ENCODE measurements at regions of chr2 and their contacts with region 1.

Region 1: GRCh38 chr2:23824777-23825212 is 102.1 kb downstream of the ATAD2B start:
- DNase-seq: no peak
- H3K4me3 ChIP-seq: no peak overlapping the region
- H3K27ac ChIP-seq: peak overlapping the region; percentile 24
- H3K4me1 ChIP-seq: peaks cover 31% of the 10 kb centered on the region
- H3K27me3 ChIP-seq: no peaks in the 10 kb centered on the region
- CTCF ChIP-seq: peak; percentile 66 to 72

Region 2: DNA sequence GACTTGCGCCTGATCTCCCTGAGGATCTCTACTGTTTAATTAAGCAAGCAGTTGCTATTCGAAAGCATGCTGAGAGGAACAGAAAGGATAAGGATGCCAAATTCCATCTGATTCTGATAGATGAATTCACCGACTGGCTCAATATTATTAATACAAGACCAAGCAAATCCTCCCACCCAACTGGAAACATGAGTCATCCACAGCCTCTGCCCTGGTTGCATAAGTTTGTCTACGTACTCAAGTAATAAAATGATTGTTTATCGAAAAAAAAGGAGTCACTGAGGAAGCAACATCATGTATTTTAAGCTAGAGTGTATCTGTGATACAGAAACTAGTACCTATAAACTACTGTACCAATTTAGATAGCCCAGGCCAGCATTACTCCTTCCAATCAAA is 76.1 kb after region 1 on chr2:
- CTCF ChIA-PET with region 1: no interaction called
- dilution Hi-C with region 1: no loop called
- in situ Hi-C with region 1: no loop called
- intact Hi-C with region 1: loop called (anchors 5 kb)
- DNase-seq: peak; percentile 82
- H3K4me3 ChIP-seq: peak overlapping the region; percentile 4 to 25 (median 24)
- H3K27ac ChIP-seq: peak overlapping the region; percentile 82
- H3K4me1 ChIP-seq: peaks cover 37% of the 10 kb centered on the region
- H3K27me3 ChIP-seq: no peaks in the 10 kb centered on the region
- CTCF ChIP-seq: no peak

Region 3: GRCh38 chr2:23926750-23927571 is 102.2 kb after region 1 on chr2 and contains the start of gene ATAD2B:
- CTCF ChIA-PET with region 1: interaction called, 7 read pairs
- dilution Hi-C with region 1: loop called (anchors 5 kb)
- in situ Hi-C with region 1: no loop called
- intact Hi-C with region 1: loop called (anchors 1 kb)
- DNase-seq: peak; percentile 96
- H3K4me3 ChIP-seq: peak within 1 kb of the TSS; percentile 91 to 98 (median 97)
- H3K27ac ChIP-seq: peak within 1 kb of the TSS; percentile 90
- H3K4me1 ChIP-seq: peaks cover 14% of the 10 kb centered on the region
- H3K27me3 ChIP-seq: no peaks in the 10 kb centered on the region
- CTCF ChIP-seq: peak; percentile 72 to 77
- total RNA-seq, gene ATAD2B: 14.0 to 16.4 TPM

Region 4: DNA sequence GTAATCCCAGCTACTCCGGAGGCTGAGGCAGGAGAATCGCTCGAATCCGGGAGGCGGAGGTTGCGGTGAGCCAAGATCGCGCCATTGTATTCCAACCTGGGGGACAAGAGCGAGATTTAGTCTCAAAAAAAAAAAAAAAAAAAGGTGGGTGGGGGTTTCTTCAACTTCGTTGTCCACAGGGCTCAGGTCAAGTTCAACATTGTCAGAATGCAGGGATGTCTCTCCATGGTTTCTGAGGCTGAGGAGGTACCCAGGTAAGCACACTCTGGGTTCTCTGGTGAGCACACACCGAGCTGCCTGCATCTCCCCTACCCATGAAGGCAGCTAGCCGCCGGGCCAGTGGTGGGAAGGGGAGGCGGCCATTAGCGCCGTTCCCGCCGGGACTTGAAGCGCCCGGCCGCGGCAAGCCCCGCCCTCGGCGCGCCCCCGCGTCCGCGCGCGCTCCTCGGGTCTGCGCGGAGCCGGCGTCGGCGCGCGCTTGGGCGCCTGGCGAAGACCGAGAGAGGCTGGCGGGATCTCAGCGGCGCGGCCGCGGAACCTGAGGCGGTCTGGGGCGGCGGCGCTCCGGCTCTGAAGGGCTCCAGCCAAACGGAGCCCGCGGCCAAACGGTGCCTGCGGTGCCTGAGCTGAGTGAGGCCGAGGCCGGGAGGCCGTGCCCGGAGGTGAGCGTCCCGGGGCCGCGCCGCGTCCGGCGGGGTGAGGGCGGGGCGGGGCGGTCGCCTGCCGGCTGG is 115.4 kb after region 1 on chr2 and contains the start of gene UBXN2A:
- CTCF ChIA-PET with region 1: no interaction called
- dilution Hi-C with region 1: no loop called
- in situ Hi-C with region 1: no loop called
- intact Hi-C with region 1: loop called (anchors 5 kb)
- DNase-seq: peak; percentile 77
- H3K4me3 ChIP-seq: peak within 1 kb of the TSS; percentile 90 to 99 (median 97)
- H3K27ac ChIP-seq: peak within 1 kb of the TSS; percentile 86
- H3K4me1 ChIP-seq: peaks cover 24% of the 10 kb centered on the region
- H3K27me3 ChIP-seq: no peaks in the 10 kb centered on the region
- CTCF ChIP-seq: no peak
- total RNA-seq, gene UBXN2A: 18.7 to 19.1 TPM

Region 5: GRCh38 chr2:23988371-23988770 is 163.6 kb after region 1 on chr2:
- CTCF ChIA-PET with region 1: no interaction called
- dilution Hi-C with region 1: no loop called
- in situ Hi-C with region 1: no loop called
- intact Hi-C with region 1: loop called (anchors 5 kb)
- DNase-seq: peak; percentile 6
- H3K4me3 ChIP-seq: no peak overlapping the region
- H3K27ac ChIP-seq: no peak overlapping the region
- H3K4me1 ChIP-seq: no peaks in the 10 kb centered on the region
- H3K27me3 ChIP-seq: no peaks in the 10 kb centered on the region
- CTCF ChIP-seq: peak; percentile 33 to 53

Region 6: DNA sequence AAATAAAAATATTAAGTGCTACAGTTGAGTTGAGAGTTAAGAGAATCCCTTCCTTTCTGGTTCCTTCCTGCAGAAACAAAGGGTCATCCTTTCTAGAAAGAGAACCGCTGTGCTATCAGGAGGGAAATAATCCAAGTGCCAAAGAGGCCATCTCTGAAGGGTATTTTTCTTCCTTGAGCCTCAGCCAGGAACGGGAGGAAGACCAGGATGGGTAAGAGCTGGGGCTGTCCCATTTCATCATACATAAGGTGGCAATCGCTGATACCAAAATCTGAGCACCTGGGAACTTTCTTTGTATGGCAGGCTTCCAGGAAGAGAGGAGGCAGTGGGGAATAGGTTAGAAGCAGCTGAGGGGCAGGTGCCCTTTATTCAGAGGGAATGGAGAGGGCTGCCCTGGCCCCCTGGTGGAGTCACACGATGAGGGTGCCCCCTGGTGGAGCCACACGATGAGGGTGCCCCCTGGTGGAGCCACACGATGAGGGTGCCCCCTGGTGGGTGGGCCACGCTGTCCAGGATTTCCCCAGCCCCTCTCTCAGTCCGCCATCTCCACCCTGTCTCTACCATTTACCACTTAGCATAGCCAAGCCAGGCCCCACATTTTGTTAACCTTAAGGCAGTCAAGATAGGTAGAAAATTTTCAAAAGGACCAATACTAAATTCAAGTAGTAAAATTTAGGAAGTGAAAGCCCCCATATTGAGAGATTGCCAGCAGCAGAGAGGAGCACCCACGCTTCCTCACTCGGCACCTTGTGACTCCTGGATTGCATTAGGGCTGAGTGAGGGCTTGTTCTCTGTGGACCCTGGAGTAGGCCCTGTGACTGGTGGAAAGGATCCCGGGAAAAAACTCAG is 339.6 kb after region 1 on chr2:
- CTCF ChIA-PET with region 1: no interaction called
- dilution Hi-C with region 1: no loop called
- in situ Hi-C with region 1: no loop called
- intact Hi-C with region 1: loop called (anchors 1 kb)
- DNase-seq: no peak
- H3K4me3 ChIP-seq: no peak overlapping the region
- H3K27ac ChIP-seq: no peak overlapping the region
- H3K4me1 ChIP-seq: no peaks in the 10 kb centered on the region
- H3K27me3 ChIP-seq: no peaks in the 10 kb centered on the region
- CTCF ChIP-seq: peak; percentile 49 to 69

Region 7: DNA sequence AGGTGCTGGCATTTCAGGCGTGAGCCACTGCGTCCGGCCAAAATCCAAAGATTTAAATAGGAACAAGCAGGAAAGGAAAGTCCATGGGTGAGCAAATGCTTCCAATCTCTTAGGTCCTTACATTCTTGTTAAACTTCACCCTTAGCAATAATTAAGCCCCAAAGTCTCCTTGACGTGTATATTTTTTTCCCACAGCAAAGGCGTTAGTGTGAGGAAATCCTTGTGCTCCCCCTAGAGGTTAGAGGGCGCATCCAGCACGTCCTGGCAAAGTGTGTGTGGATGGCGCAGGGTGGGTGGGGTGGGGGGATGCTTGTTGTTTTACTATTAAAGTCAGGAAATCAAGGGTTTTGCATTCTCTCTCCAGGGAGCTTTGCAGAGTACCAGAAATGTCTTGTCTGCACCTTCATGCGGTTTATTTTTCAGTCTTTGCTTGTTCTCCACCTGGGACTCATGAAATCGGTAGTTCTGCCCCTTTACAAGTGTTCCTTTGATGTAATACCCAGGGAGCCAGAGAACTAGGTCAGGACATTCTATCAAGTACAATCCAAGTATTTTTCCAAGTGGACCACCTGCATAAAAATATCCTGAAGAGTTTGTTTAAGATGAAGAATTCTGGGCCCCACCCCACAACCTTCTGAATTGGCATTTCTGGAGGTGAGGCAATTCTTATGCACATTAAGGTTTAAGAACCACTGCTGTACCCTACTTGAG is 557.7 kb after region 1 on chr2:
- CTCF ChIA-PET with region 1: no interaction called
- dilution Hi-C with region 1: no loop called
- in situ Hi-C with region 1: no loop called
- intact Hi-C with region 1: loop called (anchors 10 kb)
- DNase-seq: peak; percentile 42
- H3K4me3 ChIP-seq: no peak overlapping the region
- H3K27ac ChIP-seq: no peak overlapping the region
- H3K4me1 ChIP-seq: peaks cover 5% of the 10 kb centered on the region
- H3K27me3 ChIP-seq: no peaks in the 10 kb centered on the region
- CTCF ChIP-seq: peak; percentile 61 to 78